GM10248 (cell line): ENCODE measurements at regions of chr19 and their contacts with region 1.

Region 1: GRCh38 chr19:48795055-48795684 is 15.7 kb downstream of the BCAT2 start:
- DNase-seq: peak; percentile 92
- CTCF ChIP-seq: peak; percentile 85

Region 2: GRCh38 chr19:48637170-48637947 is 157.8 kb before region 1 on chr19 and contains the start of gene DBP:
- CTCF ChIA-PET with region 1: no interaction called
- POLR2A ChIA-PET with region 1: no interaction called
- DNase-seq: peak; percentile 94
- CTCF ChIP-seq: no peak

Region 3: DNA sequence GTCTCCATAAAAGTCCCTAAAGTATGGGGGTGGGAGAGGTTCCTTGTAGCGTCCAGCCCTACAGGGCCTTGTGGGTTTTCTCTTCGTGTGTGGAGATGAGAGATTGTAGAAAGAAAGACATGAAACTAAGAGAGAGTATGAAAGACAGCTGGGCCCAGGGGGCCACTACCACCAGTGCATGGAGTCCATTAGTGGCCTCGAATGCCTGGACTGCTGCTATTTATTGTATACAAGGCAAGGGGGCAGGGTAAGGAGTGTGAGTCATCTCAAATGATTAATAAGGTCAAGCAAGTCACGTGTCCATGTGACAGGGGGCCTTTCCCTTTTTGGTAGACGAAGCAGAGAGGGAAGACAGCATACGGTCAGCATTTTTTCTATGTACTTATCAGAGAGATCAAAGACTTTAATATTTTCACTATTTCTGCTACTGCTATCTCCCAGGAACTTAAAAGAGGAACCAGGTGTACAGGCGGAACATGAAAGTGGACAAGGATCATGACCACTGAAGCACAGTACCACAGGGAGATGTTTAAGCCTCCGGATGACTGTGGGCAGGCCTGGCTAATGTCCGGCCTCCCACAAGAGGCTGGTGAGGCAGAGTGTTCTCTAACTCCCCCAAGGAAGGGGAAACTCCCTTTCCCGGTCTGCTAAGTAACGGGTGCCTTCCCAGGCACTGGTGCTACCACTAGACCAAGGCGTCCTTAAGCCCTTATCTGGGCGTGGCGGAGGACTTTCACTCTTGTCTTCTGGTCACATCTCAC is 14.4 kb before region 1 on chr19:
- CTCF ChIA-PET with region 1: interaction called, 18 read pairs
- POLR2A ChIA-PET with region 1: no interaction called
- DNase-seq: no peak
- CTCF ChIP-seq: no peak

Region 4: GRCh38 chr19:48812094-48812929 is 17.1 kb after region 1 on chr19:
- CTCF ChIA-PET with region 1: interaction called, 54 read pairs
- POLR2A ChIA-PET with region 1: interaction called, 3 read pairs
- DNase-seq: peak; percentile 95
- CTCF ChIP-seq: no peak

Region 5: GRCh38 chr19:48835734-48836088 is 40.5 kb after region 1 on chr19:
- CTCF ChIA-PET with region 1: interaction called, 291 read pairs
- POLR2A ChIA-PET with region 1: no interaction called
- DNase-seq: peak; percentile 93
- CTCF ChIP-seq: peak; percentile 90

Region 6: DNA sequence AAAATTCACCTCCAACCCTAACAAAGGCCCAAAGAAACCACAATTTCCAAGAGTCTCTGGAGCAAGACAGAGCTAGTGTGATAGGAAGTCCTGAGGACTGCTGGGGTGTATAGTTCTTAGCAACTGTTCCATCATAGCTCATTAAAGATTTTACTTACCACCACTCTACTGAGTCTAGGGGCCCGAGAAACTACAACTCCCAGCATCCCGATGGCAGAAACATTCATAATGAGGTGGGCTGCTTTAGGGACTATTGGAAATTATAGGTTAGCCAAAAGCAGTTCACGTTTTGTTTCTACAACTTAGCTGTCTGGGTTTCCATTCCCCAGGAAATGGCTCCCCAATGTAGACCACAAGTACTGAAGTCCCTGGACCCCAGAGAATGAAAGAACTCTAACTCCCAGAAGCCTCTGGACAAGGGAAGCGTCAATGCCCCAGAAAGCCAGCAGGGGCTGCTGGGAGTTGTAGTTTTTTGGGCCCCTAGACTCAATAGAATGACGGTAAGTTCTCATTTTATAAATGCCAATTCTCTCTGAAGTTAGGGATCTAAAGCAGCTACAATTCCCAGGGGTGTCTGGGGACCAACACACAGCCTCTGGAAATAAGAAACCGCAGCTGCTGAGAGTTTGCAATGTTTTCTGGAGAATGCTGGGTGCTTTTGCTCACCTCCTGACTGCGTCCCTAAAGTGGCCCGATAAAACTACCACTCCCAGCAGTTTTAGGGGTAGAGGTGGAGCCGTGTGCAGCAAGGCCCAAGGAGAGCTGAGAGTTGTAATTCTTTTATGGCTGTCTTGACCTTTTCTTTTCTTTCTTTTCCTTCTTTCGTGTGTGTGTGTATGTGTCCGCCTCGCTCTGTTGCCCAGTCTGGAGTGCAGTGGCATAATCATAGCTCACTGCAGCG is 181.0 kb after region 1 on chr19:
- CTCF ChIA-PET with region 1: interaction called, 39 read pairs
- POLR2A ChIA-PET with region 1: no interaction called
- DNase-seq: no peak
- CTCF ChIP-seq: no peak